ENCODE measurements at regions of chr19 and their contacts with region 1.

Region 1: DNA sequence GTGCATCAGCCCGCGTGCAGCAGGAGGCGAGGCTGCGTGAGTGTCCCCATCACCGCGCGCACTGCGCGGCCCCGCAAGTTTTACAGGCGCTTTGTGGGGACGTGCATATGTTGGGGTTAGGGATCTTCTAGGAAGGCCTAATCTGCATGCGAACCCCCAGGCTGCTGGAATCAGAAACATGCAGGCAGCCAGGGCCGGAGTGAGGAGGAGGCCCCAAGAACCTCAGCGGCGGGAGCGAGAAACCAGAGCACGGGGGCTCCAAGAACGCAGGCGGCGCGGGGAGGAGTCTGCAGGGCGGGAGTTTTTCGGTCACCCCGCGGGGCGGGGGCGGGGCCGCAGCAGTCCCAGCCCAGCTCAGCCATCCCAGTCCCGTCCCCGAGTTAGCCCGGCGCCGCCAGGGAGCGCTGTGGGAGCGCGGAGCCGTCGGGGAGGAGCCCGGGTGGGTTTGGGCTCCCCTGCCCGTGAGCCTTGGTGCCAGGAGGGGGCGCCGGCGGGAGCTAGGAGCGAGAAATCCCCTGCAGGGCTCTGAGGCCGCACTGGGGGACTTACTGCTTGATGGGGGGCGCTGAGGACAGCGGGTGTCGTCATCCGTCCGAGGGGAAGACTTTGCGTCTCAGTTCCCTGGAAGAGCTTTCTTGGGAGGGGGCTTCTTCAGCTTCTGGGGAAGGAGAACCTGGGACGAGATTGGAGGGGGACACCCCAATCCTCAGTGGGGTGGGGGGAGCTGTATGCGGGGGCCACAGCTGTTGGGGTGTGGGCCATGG is 933 bp upstream of the NRTN start:
- DNase-seq: peak; percentile 93
- H3K4me3 ChIP-seq: peak overlapping the region; percentile 55
- H3K27ac ChIP-seq: no peak overlapping the region
- H3K4me1 ChIP-seq: peaks cover 17% of the 10 kb centered on the region
- CTCF ChIP-seq: peak; percentile 100

Region 2: GRCh38 chr19:5719961-5720790 is 83.8 kb before region 1 on chr19 and contains the starts of genes CATSPERD and LONP1:
- CTCF ChIA-PET with region 1: interaction called, 17 read pairs
- POLR2A ChIA-PET with region 1: interaction called, 3 read pairs
- intact Hi-C with region 1: no loop called
- DNase-seq: peak; percentile 100
- H3K4me3 ChIP-seq: peak within 1 kb of the TSS; percentile 98
- H3K27ac ChIP-seq: peak within 1 kb of the TSS; percentile 85
- H3K4me1 ChIP-seq: peaks cover 26% of the 10 kb centered on the region
- CTCF ChIP-seq: peak; percentile 86
- total RNA-seq, gene CATSPERD: not detected in 2 replicates
- total RNA-seq, gene LONP1: 170 and 191 TPM in 2 replicates

Region 3: GRCh38 chr19:5827891-5828660 is 24.1 kb after region 1 on chr19:
- CTCF ChIA-PET with region 1: interaction called, 4 read pairs
- POLR2A ChIA-PET with region 1: interaction called, 3 read pairs
- intact Hi-C with region 1: loop called (anchors 1 kb)
- DNase-seq: peak; percentile 95
- H3K4me3 ChIP-seq: peak overlapping the region; percentile 72
- H3K27ac ChIP-seq: peak overlapping the region; percentile 91
- H3K4me1 ChIP-seq: peaks cover 37% of the 10 kb centered on the region
- CTCF ChIP-seq: no peak

Region 4: DNA sequence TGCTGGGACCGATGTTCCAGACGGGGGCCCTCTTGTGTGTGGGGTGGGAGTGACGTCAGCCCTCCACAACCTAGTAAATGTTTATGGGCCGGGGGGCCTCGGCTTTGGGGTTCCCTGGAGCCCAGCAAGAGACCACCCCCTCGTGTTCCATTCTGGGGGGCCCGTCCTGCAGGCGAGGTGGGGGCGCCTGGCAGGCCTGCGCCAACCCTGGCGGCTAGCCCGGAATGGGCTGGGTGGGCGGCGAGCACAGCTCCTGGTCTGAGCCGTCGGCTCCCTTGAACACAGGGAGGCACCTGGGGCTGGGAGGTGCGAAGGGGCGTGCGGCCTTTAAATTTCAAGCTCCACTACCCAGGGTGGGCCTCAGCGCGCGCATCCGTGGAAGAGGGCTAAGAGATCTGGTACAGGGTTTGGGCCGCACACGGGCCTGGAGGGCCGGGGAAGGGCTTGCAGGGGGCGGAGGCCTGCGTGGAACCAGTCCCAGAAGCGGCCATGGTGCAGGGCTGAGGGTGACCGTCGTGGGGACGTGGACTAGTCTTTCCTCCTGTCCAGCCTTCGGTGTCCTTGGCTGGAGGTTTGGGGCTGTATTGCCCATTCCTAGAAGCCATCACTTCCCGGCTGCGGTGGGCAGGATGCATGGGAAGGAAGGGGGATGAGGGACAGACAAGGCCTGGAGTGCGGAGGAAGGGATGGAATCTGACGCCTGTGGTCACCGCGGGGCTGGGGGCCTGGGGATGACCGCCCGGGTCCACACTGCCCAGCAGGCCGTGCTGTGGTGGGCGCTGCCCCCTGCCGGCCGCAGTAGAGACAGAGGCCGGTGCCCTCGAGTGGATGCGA is 88.2 kb after region 1 on chr19:
- CTCF ChIA-PET with region 1: interaction called, 10 read pairs
- POLR2A ChIA-PET with region 1: interaction called, 4 read pairs
- intact Hi-C with region 1: loop called (anchors 1 kb)
- DNase-seq: peak; percentile 32
- H3K4me3 ChIP-seq: no peak overlapping the region
- H3K27ac ChIP-seq: no peak overlapping the region
- H3K4me1 ChIP-seq: no peaks in the 10 kb centered on the region
- CTCF ChIP-seq: peak; percentile 75

Region 5: GRCh38 chr19:5935473-5936291 is 131.7 kb after region 1 on chr19:
- CTCF ChIA-PET with region 1: no interaction called
- POLR2A ChIA-PET with region 1: no interaction called
- intact Hi-C with region 1: no loop called
- DNase-seq: no peak
- H3K4me3 ChIP-seq: no peak overlapping the region
- H3K27ac ChIP-seq: no peak overlapping the region
- H3K4me1 ChIP-seq: no peaks in the 10 kb centered on the region
- CTCF ChIP-seq: no peak

Region 6: DNA sequence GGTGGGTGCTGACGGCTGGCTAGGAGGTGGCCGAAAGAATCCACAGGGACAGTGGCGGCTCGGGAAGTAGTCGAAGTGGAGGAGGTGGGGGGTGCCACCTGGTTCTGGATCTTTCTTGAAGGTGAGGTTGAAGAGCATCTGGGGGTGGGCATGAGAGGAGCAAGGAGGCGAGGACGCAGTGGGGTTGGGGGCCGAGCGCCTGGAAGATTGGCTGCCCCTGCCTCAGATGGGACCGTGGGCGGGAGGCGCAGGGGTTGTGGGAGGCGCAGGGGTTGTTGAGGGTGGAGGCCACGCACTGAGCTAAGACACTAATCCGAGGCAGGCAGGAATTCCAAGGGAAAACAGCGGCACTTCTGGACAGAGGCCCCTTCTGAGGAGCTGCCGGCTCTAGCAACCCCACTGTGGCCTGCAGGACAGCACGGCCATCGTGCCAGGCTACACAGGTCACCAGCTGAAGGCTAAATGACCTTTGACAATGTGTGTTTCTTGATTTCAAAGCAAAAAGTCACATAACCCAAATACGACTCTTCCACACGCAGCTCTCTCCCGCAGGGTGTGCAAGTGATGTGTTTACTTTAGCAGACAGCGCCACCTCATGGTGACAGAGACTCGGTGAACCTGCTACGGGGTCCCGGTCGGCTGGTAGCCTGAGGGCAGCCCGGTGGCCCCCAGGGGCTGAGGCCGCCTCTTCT is 218.1 kb after region 1 on chr19:
- CTCF ChIA-PET with region 1: interaction called, 5 read pairs
- POLR2A ChIA-PET with region 1: no interaction called
- intact Hi-C with region 1: loop called (anchors 1 kb)
- DNase-seq: peak; percentile 89
- H3K4me3 ChIP-seq: no peak overlapping the region
- H3K27ac ChIP-seq: no peak overlapping the region
- H3K4me1 ChIP-seq: no peaks in the 10 kb centered on the region
- CTCF ChIP-seq: peak; percentile 85